Activated CD4-positive, alpha-beta memory T cell treated with anti-CD3 and anti-CD28 coated beads, Interleukin-2, amount 10 ng/mL, durations not matched to agents 7 days and 5 days (primary cell): ENCODE measurements at regions of chr3 and their contacts with region 1.

Region 1: GRCh38 chr3:111967651-111968274 is 11.1 kb upstream of the ABHD10 start:
- DNase-seq: peak; percentile 82
- H3K4me3 Mint-ChIP-seq: no peak overlapping the region
- H3K27ac Mint-ChIP-seq: no peak overlapping the region
- H3K4me1 Mint-ChIP-seq: peaks cover 12% of the 10 kb centered on the region
- H3K27me3 Mint-ChIP-seq: no peaks in the 10 kb centered on the region

Region 2: GRCh38 chr3:111723293-111724215 is 244.2 kb before region 1 on chr3:
- CTCF ChIA-PET with region 1: interaction called, 200 read pairs
- POLR2A ChIA-PET with region 1: no interaction called
- DNase-seq: no peak
- H3K4me3 Mint-ChIP-seq: no peak overlapping the region
- H3K27ac Mint-ChIP-seq: no peak overlapping the region
- H3K4me1 Mint-ChIP-seq: peaks cover 5% of the 10 kb centered on the region
- H3K27me3 Mint-ChIP-seq: no peaks in the 10 kb centered on the region

Region 3: GRCh38 chr3:111859974-111860859 is 107.5 kb before region 1 on chr3:
- CTCF ChIA-PET with region 1: interaction called, 18 read pairs
- POLR2A ChIA-PET with region 1: no interaction called
- DNase-seq: peak; percentile 72
- H3K4me3 Mint-ChIP-seq: peak overlapping the region; percentile 87
- H3K27ac Mint-ChIP-seq: peak overlapping the region; percentile 61
- H3K4me1 Mint-ChIP-seq: peaks cover 18% of the 10 kb centered on the region
- H3K27me3 Mint-ChIP-seq: peaks cover 38% of the 10 kb centered on the region

Region 4: GRCh38 chr3:111989061-111989678 is 21.4 kb after region 1 on chr3:
- CTCF ChIA-PET with region 1: interaction called, 13 read pairs
- POLR2A ChIA-PET with region 1: no interaction called
- DNase-seq: no peak
- H3K4me3 Mint-ChIP-seq: no peak overlapping the region
- H3K27ac Mint-ChIP-seq: no peak overlapping the region
- H3K4me1 Mint-ChIP-seq: peaks cover 31% of the 10 kb centered on the region
- H3K27me3 Mint-ChIP-seq: no peaks in the 10 kb centered on the region

Region 5: GRCh38 chr3:112187300-112187699 is 219.5 kb after region 1 on chr3:
- CTCF ChIA-PET with region 1: no interaction called
- POLR2A ChIA-PET with region 1: no interaction called
- DNase-seq: no peak
- H3K4me3 Mint-ChIP-seq: no peak overlapping the region
- H3K27ac Mint-ChIP-seq: no peak overlapping the region
- H3K4me1 Mint-ChIP-seq: peaks cover 5% of the 10 kb centered on the region
- H3K27me3 Mint-ChIP-seq: no peaks in the 10 kb centered on the region